ENCODE measurements at regions of chr4 and their contacts with region 1.

Region 1: DNA sequence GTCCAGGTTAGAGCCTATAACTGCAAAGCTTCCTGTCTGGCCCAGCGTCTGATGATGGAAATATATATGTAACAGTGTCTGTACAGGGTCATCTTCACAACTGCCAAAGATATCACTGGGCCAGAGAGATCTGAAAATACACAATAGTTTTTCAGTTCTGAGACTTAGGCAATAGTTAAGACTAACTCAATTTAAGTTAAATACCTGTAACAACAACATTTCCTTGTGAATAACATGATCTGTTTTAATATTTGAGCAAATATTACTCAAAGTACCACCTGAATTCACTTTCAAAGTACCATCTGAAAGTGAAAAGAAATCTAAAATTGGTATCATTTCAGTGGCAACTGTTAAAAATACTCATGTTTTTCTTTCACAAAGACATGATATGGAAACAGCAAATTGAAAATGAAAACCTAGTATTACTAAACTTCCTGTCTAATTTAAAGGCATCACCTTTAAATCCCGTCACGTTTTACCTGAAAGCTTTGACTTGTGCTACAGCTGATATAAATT is 9.6 kb downstream of the ZAR1 start:
- DNase-seq: peak; percentile 45
- ATAC-seq: peak; percentile 88
- H3K4me3 ChIP-seq: no peak overlapping the region
- H3K27ac ChIP-seq: peak overlapping the region; percentile 28
- H3K4me1 ChIP-seq: peaks cover 17% of the 10 kb centered on the region
- H3K27me3 ChIP-seq: no peaks in the 10 kb centered on the region
- CTCF ChIP-seq: no peak
- EP300 ChIP-seq: peak in 1 of 2 experiments; percentile 75; a peak in 1 of 4 replicates
- POLR2A ChIP-seq: no peak
- RAD21 ChIP-seq: no peak

Region 2: DNA sequence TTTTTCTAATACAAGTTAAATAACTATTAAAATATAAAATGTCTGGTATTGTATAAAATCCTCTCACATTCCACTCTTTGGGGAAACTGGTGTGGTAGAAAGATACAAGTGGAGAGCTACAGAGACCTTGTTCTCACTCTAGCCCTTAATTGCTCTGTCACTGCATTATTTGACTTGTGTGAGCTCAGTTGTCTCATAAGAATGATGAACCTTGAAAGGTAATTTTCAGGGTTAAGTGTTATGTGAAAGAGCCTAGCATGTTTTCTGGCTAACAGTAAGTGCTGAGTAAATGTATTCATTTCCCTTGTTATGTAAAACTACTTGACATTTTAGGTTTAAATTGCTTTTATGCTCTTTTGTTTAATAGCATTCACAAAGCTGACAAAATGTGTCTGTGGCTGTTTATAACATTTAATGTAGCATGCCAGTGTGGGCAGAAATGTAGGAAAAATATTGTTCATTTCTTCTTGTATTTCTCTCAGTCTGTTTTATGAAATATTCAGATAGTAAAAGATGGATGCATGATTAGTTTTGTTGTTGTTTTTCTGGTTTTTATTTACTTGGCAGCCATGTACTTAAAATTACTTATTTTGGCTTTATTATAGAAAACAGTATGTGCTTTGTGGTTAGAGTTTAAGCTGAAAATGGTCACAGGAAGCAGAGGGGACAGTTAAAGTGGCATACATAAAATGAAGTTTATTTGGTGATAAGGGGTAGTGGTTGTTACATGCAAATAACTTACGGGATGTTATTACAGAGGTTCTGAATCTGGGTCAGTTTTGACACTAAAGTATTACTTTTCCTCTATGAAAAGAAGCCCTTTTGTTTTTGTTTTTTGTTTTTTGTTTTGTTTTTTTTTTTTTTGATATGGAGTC is 129.1 kb before region 1 on chr4:
- CTCF ChIA-PET with region 1: no interaction called
- POLR2A ChIA-PET with region 1: no interaction called
- RAD21 ChIA-PET with region 1: no interaction called
- SMC1A ChIA-PET with region 1: no interaction called
- in situ Hi-C with region 1: no loop called
- intact Hi-C with region 1: no loop called
- DNase-seq: peak; percentile 13
- ATAC-seq: peak; percentile 68
- H3K4me3 ChIP-seq: no peak overlapping the region
- H3K27ac ChIP-seq: 0 out of 2 replicates have a peak overlapping the region, but pooled peaks have one; percentile 9
- H3K4me1 ChIP-seq: no peaks in the 10 kb centered on the region
- H3K27me3 ChIP-seq: no peaks in the 10 kb centered on the region
- CTCF ChIP-seq: no peak
- EP300 ChIP-seq: no peak
- POLR2A ChIP-seq: no peak
- RAD21 ChIP-seq: no peak

Region 3: DNA sequence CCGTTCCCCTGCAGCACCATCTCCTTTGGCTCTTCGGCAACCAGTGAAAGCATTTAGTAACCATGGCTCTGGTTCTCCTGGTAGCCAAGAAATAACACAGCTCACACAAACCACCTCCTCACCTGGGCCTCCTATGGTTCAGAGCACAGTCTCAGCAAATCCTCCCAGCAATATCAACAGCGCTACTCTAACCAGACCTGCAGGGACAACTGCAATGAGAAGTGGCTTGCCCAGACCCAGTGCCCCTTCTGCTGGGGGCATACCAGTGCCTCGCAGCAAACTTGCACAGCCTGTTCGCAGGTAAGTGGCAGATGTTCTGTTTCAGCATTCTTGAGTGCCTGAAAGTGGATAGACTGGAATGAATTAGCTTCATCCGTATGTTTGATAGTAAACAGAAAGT is 79.5 kb before region 1 on chr4:
- CTCF ChIA-PET with region 1: no interaction called
- POLR2A ChIA-PET with region 1: no interaction called
- RAD21 ChIA-PET with region 1: no interaction called
- SMC1A ChIA-PET with region 1: no interaction called
- in situ Hi-C with region 1: no loop called
- intact Hi-C with region 1: no loop called
- DNase-seq: no peak
- ATAC-seq: no peak
- H3K4me3 ChIP-seq: no peak overlapping the region
- H3K27ac ChIP-seq: no peak overlapping the region
- H3K4me1 ChIP-seq: no peaks in the 10 kb centered on the region
- H3K27me3 ChIP-seq: no peaks in the 10 kb centered on the region
- CTCF ChIP-seq: no peak
- EP300 ChIP-seq: no peak
- POLR2A ChIP-seq: no peak
- RAD21 ChIP-seq: no peak

Region 4: DNA sequence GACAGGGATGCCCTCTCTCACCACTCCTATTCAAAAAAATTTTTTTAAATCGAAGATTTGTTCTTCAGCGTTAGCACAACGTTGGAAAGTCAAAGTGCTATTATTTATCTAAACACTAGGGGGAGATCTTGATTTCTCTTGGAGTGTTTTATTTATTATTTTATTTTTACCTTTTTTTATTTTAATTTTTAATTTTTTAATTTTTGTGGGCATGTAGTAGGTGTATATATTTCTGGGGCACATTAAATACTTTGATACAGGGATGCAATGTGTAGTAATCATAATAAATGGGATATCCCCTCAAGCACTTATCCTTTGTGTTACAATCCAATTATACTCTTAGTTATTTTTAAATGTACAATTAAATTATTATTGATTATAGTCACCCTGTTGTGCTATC is 53.9 kb before region 1 on chr4:
- CTCF ChIA-PET with region 1: no interaction called
- POLR2A ChIA-PET with region 1: no interaction called
- RAD21 ChIA-PET with region 1: no interaction called
- SMC1A ChIA-PET with region 1: no interaction called
- in situ Hi-C with region 1: no loop called
- intact Hi-C with region 1: loop called (anchors 5 kb)
- DNase-seq: no peak
- ATAC-seq: peak; percentile 49; the same call in 1 of the 3 replicates
- H3K4me3 ChIP-seq: no peak overlapping the region
- H3K27ac ChIP-seq: no peak overlapping the region
- H3K4me1 ChIP-seq: no peaks in the 10 kb centered on the region
- H3K27me3 ChIP-seq: no peaks in the 10 kb centered on the region
- CTCF ChIP-seq: peak in 1 of 3 experiments; percentile 31; a peak in 2 of 6 replicates
- EP300 ChIP-seq: no peak
- POLR2A ChIP-seq: no peak
- RAD21 ChIP-seq: peak; percentile 53